ENCODE measurements at regions of chr1 and their contacts with region 1.

Region 1: GRCh38 chr1:53182111-53182593 is 14.5 kb upstream of the CPT2 start:
- DNase-seq: peak; percentile 69 to 88 (median 78)
- ATAC-seq: peak; percentile 81
- H3K4me3 ChIP-seq: no peak overlapping the region
- H3K4me3 Mint-ChIP-seq: no peak overlapping the region
- H3K27ac ChIP-seq: no peak overlapping the region
- H3K27ac Mint-ChIP-seq: no peak overlapping the region
- H3K4me1 ChIP-seq: peaks cover 4% of the 10 kb centered on the region
- H3K4me1 Mint-ChIP-seq: no peaks in the 10 kb centered on the region
- H3K27me3 ChIP-seq: peaks cover 0 to 2% of the 10 kb centered on the region in 2 experiments
- H3K27me3 Mint-ChIP-seq: peaks cover 6% of the 10 kb centered on the region
- CTCF ChIP-seq: peak; percentile 91

Region 2: GRCh38 chr1:52904927-52905698 is 277.0 kb before region 1 on chr1:
- CTCF ChIA-PET with region 1: interaction called, 3 read pairs
- POLR2A ChIA-PET with region 1: no interaction called
- intact Hi-C with region 1: loop called in 1 of 2 experiments (anchors 5 kb)
- DNase-seq: peak in 8 of 14 experiments; percentile 13 to 52 (median 35)
- ATAC-seq: peak; percentile 71
- H3K4me3 ChIP-seq: no peak overlapping the region
- H3K4me3 Mint-ChIP-seq: no peak overlapping the region
- H3K27ac ChIP-seq: no peak overlapping the region
- H3K27ac Mint-ChIP-seq: no peak overlapping the region
- H3K4me1 ChIP-seq: no peaks in the 10 kb centered on the region
- H3K4me1 Mint-ChIP-seq: no peaks in the 10 kb centered on the region
- H3K27me3 ChIP-seq: no peaks in the 10 kb centered on the region
- H3K27me3 Mint-ChIP-seq: no peaks in the 10 kb centered on the region
- CTCF ChIP-seq: peak; percentile 37

Region 3: DNA sequence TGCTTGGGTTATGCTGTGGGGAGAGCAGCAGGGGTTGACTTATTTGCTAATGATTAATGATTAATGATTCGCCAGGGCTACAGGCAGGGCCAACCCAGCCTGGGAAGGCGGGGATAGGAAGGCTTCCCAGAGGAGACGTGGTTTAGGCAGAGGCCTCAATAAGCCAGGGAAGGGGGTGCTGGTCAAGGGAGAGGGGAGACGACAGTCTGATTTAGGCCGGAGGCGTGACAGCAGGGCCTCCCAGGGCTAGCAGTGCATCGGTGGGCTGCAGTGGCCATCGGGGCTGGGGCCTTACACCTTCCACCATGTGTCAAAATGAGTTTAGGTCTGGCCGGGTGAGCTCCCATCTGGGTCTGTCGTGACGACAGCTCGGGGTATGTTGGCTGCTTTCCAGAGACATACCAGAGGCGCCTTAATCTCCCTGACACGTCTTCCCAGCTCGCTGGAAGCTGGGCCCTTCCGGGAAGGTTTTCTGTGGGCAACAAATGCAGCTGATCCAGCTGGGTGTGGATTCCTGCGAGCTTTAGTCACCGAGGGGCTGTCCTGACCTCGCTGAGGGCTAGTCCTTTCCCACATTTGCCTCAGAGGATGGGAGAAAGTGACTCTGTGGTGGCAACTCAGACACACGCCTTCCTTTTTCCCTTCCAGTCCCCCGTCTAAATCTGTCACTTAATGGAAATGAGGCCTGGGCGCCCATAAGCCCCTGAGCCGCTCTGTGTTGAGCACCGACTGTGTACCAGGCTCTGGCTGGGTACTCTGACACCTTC is 36.0 kb before region 1 on chr1:
- CTCF ChIA-PET with region 1: no interaction called
- POLR2A ChIA-PET with region 1: no interaction called
- intact Hi-C with region 1: no loop called
- DNase-seq: no peak
- ATAC-seq: no peak
- H3K4me3 ChIP-seq: no peak overlapping the region
- H3K4me3 Mint-ChIP-seq: no peak overlapping the region
- H3K27ac ChIP-seq: no peak overlapping the region
- H3K27ac Mint-ChIP-seq: no peak overlapping the region
- H3K4me1 ChIP-seq: no peaks in the 10 kb centered on the region
- H3K4me1 Mint-ChIP-seq: no peaks in the 10 kb centered on the region
- H3K27me3 ChIP-seq: peaks cover 0 to 2% of the 10 kb centered on the region in 2 experiments
- H3K27me3 Mint-ChIP-seq: no peaks in the 10 kb centered on the region
- CTCF ChIP-seq: no peak

Region 4: GRCh38 chr1:53196485-53197270 is 14.5 kb after region 1 on chr1 and contains the start of gene CPT2:
- CTCF ChIA-PET with region 1: interaction called, 10 read pairs
- POLR2A ChIA-PET with region 1: interaction called, 6 read pairs
- intact Hi-C with region 1: no loop called
- DNase-seq: peak; percentile 75 to 96 (median 89)
- ATAC-seq: peak; percentile 92
- H3K4me3 ChIP-seq: peak within 1 kb of the TSS; percentile 92
- H3K4me3 Mint-ChIP-seq: peak within 1 kb of the TSS; percentile 93
- H3K27ac ChIP-seq: peak within 1 kb of the TSS; percentile 93 to 97
- H3K27ac Mint-ChIP-seq: peak within 1 kb of the TSS; percentile 93
- H3K4me1 ChIP-seq: peaks cover 25% of the 10 kb centered on the region
- H3K4me1 Mint-ChIP-seq: peaks cover 29% of the 10 kb centered on the region
- H3K27me3 ChIP-seq: no peaks in the 10 kb centered on the region
- H3K27me3 Mint-ChIP-seq: no peaks in the 10 kb centered on the region
- CTCF ChIP-seq: no peak
- total RNA-seq, gene CPT2: 10.6 to 12.0 TPM

Measured in CD4-positive, alpha-beta T cell (primary cell).